BJ (cell line): ENCODE measurements at regions of chr7 and their contacts with region 1.

Region 1: GRCh38 chr7:148962823-148963582 is 65.3 kb downstream of the PDIA4 start:
- DNase-seq: no peak
- H3K4me3 ChIP-seq: peak overlapping the region; percentile 53
- H3K27me3 ChIP-seq: peaks cover 1% of the 10 kb centered on the region; the same call in 1 of the 2 replicates
- CTCF ChIP-seq: peak; percentile 78

Region 2: GRCh38 chr7:148503875-148504487 is 459.0 kb before region 1 on chr7:
- CTCF ChIA-PET with region 1: interaction called, 56 read pairs
- POLR2A ChIA-PET with region 1: no interaction called
- DNase-seq: no peak
- H3K4me3 ChIP-seq: no peak overlapping the region
- H3K27me3 ChIP-seq: peaks cover 4% of the 10 kb centered on the region; the same call in 1 of the 2 replicates
- CTCF ChIP-seq: peak; percentile 70

Region 3: DNA sequence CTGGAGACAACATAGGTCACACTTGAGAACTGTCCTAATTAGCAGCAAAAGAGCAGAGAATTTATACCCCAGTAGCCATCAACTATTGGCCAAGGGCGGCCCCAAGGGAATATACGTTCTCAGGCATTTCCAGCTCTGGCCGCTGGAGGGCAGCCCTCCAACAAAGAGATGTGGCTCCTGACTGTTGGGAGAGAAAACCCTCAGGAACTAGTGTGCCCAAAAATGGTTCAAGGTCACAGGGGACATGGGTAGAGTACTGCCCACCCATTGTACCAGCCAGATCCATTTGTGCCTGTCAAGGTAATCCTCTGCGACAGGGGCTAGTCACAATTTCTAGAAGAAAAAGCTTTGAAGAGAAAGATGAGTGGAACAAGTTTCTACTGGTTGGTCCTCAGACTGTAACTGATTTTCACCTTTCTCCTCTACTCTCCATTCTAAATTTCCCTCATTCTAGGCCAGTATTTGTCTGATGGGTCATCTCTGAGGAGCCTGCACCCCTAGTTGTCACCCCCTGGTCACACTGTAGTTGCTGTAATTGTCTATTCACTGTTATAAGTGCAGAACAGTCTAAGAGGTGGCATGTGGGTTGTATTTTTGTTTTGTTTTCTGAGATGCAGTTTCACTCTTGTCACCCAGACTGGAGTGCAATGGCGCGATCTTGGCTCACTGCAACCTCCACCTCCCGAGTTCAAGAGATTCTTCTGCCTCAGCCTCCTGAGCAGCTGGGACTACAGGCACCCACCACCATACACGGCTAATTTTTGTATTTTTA is 387.2 kb before region 1 on chr7:
- CTCF ChIA-PET with region 1: interaction called, 31 read pairs
- POLR2A ChIA-PET with region 1: no interaction called
- DNase-seq: no peak
- H3K4me3 ChIP-seq: no peak overlapping the region
- H3K27me3 ChIP-seq: no peaks in the 10 kb centered on the region
- CTCF ChIP-seq: peak; percentile 90

Region 4: GRCh38 chr7:148975896-148976295 is 12.9 kb after region 1 on chr7:
- CTCF ChIA-PET with region 1: interaction called, 15 read pairs
- POLR2A ChIA-PET with region 1: no interaction called
- DNase-seq: no peak
- H3K4me3 ChIP-seq: no peak overlapping the region
- H3K27me3 ChIP-seq: no peaks in the 10 kb centered on the region; the same call in 1 of the 2 replicates
- CTCF ChIP-seq: no peak

Region 5: DNA sequence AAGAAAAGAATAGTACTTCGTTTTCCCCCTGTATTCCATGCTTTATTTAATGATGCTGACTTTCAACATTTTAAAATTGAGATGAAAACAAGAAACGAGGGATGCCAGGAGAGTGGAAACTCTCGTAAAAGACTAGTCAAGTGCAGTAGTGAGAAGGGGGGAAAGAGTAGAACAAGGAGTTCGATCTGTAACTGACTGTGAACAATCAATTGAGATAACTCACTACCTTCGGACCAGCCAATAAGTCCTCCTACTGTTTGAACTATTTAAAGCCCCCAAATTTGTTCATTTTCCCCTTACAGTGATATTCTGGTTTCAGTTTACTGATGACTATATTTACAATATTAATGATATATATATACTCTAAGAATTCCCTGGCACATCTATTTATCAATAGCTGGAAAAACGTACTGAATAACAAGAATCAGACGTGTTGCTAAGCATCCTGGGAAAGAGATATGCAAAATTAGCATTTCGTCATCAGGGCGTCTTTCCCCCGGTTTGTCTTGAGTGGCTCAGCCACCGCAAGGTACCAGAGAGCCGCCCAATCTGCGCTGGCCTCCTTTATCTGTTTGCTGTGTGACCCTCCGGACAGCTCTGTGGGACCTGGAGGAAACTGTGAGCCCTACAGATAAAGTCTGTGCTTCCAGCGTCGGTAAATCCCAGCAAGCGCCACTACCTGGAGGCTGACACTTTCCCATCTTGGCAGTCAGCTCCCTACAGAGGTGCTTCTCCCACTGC is 24.2 kb after region 1 on chr7:
- CTCF ChIA-PET with region 1: interaction called, 11 read pairs
- POLR2A ChIA-PET with region 1: no interaction called
- DNase-seq: peak; percentile 50
- H3K4me3 ChIP-seq: peak overlapping the region; percentile 69
- H3K27me3 ChIP-seq: peaks cover 2% of the 10 kb centered on the region; the same call in 1 of the 2 replicates
- CTCF ChIP-seq: no peak